ENCODE measurements at regions of chr12 and their contacts with region 1.

Region 1: DNA sequence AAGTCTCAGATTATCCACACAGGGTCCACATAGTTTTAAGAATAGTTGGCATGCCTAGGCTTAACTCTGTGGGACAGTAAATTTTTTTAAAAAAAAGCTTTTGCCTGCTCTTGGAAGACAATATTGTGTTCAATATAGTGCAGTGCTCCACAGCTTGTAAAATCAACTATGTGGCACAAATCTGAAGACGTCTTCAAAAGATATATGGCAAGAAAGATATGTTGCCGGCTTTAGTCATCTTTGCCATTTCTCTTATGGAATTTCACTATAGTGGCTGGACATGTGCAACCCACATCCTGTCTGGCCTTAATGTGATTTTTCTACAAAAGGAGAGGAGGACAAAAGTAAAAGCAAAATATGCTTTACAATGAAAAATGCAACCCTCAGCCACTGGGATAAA is 90.5 kb downstream of the MGST1 start:
- DNase-seq: no peak
- CTCF ChIP-seq: no peak

Region 2: GRCh38 chr12:16449459-16449858 is 11.5 kb after region 1 on chr12:
- CTCF ChIA-PET with region 1: interaction called, 13 read pairs
- POLR2A ChIA-PET with region 1: no interaction called
- DNase-seq: no peak
- CTCF ChIP-seq: no peak

Region 3: DNA sequence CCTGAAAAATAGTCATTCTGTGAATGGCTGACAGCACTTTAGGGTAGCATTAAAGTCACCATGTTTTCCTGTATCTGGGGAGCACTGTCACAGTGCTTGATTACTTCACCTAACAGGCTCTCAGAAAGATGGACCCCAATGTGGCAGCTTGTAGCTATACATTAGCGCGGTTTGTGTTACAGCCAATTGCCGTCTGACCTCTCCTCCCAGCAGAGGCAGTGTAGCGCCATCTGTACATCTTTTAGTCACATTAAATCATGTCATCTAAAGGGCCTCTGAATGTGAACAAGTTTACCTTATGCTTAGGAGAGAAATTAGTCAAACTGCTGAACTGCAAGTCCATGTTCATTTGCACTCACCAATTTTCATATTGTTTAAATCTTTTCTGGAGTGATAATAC is 54.3 kb after region 1 on chr12:
- CTCF ChIA-PET with region 1: no interaction called
- POLR2A ChIA-PET with region 1: no interaction called
- DNase-seq: no peak
- CTCF ChIP-seq: no peak

Measured in GM10248 (cell line).